Psoas muscle (tissue), 8 donors: ENCODE measurements at regions of chr1 and their contacts with region 1.

Region 1: DNA sequence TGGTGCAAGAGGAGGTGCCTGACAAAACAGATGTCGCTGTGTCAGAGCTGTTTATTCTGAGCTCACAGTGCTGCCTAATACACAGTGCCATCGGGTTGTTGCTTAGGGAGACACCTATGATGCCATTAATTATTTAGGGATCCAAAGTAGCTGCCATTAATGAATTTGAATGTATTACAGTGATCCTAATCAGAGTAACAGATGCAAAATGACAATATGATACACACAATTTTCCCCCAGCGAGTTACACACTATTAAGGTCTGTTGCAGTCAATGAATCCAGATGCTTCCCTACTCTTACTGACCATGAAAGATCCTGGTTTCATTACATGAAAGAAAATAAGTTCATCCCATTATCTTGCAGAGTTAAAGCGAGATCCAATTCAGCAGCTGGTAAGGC is 91.3 kb downstream of the RWDD3 start:
- DNase-seq: no peak
- ATAC-seq: no peak
- H3K4me3 ChIP-seq: no peak overlapping the region
- H3K27ac ChIP-seq: no peak overlapping the region
- H3K4me1 ChIP-seq: no peaks in the 10 kb centered on the region
- H3K27me3 ChIP-seq: peaks cover 0 to 1% (median 0%) of the 10 kb centered on the region in 3 donors
- CTCF ChIP-seq: no peak

Region 2: DNA sequence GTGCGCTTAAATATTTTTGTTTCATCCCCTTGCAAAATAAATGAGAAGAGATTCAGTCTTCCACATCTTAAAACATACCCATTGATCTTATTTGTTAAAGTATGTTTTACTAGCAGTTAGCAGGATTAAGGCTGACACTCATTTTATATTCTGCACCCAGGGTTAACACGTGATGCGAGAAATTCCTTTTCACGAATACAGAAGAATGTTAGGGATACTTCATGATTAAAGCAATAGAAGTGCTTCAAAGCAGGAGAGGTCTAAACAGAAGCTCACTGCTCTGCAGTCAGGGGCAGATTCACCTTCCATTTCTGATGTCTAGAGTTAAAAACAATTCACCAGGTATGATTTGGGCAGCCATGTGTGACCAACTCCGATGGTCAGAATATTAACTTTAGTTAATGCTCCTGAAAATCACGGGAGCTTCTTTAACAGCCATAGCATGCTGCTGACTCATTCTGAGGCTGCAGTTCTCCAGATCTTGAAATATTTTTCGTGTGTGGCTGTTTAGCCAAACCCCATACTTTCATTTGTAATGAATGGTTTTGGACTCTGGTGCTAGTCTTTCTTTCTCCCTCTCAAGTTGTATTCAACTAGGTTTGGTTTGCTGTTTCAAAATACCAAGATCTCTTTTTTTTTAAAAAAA is 1663.4 kb before region 1 on chr1:
- intact Hi-C with region 1: no loop called
- DNase-seq: no peak
- ATAC-seq: no peak
- H3K4me3 ChIP-seq: peak overlapping the region; percentile 11
- H3K27ac ChIP-seq: no peak overlapping the region
- H3K4me1 ChIP-seq: peaks cover 22% of the 10 kb centered on the region
- H3K27me3 ChIP-seq: no peaks in the 10 kb centered on the region
- CTCF ChIP-seq: no peak

Region 3: GRCh38 chr1:95035536-95035935 is 289.8 kb before region 1 on chr1:
- intact Hi-C with region 1: no loop called
- DNase-seq: no peak
- ATAC-seq: no peak
- H3K4me3 ChIP-seq: no peak overlapping the region
- H3K27ac ChIP-seq: no peak overlapping the region
- H3K4me1 ChIP-seq: no peaks in the 10 kb centered on the region
- H3K27me3 ChIP-seq: no peaks in the 10 kb centered on the region
- CTCF ChIP-seq: no peak

Region 4: DNA sequence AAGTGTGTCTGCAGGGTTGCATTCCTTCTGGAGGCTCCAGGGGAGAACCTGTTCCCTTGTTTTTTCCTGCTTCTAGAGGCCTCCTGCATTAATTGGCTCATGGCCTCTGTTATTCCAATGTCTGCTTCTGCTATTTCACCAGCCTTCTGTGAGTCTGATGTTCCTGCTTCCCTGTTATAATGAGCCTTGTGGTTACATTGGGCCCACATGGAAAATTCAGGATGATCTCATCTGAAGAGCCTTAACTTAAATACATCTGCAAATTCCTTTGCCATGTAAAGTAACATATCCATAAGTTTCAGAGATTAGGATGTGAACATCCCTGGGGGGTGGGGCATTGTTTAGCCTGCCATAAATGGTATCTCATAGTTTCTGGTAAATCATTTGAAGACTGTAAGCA is 89.8 kb after region 1 on chr1:
- intact Hi-C with region 1: loop called in 1 of 2 experiments (anchors 5 kb)
- DNase-seq: no peak
- ATAC-seq: no peak
- H3K4me3 ChIP-seq: no peak overlapping the region
- H3K27ac ChIP-seq: no peak overlapping the region
- H3K4me1 ChIP-seq: no peaks in the 10 kb centered on the region
- H3K27me3 ChIP-seq: no peaks in the 10 kb centered on the region
- CTCF ChIP-seq: no peak